ENCODE measurements at regions of chr7 and their contacts with region 1.

Region 1: GRCh38 chr7:45435846-45436245 is 138.3 kb upstream of the ADCY1 start:
- H3K4me3 Mint-ChIP-seq: no peak overlapping the region
- H3K27ac Mint-ChIP-seq: no peak overlapping the region
- H3K4me1 Mint-ChIP-seq: no peaks in the 10 kb centered on the region
- H3K27me3 Mint-ChIP-seq: peaks cover 2% of the 10 kb centered on the region

Region 2: GRCh38 chr7:44145969-44146911 is 1289.6 kb before region 1 on chr7:
- intact Hi-C with region 1: no loop called
- H3K4me3 Mint-ChIP-seq: peak overlapping the region; percentile 57
- H3K27ac Mint-ChIP-seq: no peak overlapping the region
- H3K4me1 Mint-ChIP-seq: peaks cover 17% of the 10 kb centered on the region
- H3K27me3 Mint-ChIP-seq: peaks cover 46% of the 10 kb centered on the region

Region 3: DNA sequence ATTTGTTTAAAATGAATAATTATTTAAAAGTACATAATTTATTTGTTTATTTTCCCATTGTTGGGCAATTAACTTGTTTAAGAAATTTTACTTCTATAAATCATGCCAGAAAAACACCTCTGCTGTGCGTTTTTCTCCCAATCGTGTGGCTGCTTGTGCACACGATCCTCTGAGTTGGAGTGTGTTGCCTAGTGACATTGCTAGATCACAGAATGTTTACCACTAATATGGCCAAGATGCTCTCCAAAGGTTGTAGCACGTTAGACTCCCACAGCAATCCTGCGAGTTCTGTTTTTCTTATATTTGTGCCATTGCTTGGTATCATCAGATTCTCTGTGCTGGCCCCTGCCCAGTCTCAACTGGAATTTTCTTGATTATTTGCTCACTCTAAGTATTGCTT is 68.8 kb before region 1 on chr7:
- intact Hi-C with region 1: no loop called
- H3K4me3 Mint-ChIP-seq: no peak overlapping the region
- H3K27ac Mint-ChIP-seq: no peak overlapping the region
- H3K4me1 Mint-ChIP-seq: no peaks in the 10 kb centered on the region
- H3K27me3 Mint-ChIP-seq: peaks cover 2% of the 10 kb centered on the region

Region 4: GRCh38 chr7:45450571-45451204 is 14.8 kb after region 1 on chr7:
- intact Hi-C with region 1: loop called (anchors 1 kb)
- H3K4me3 Mint-ChIP-seq: no peak overlapping the region
- H3K27ac Mint-ChIP-seq: no peak overlapping the region
- H3K4me1 Mint-ChIP-seq: no peaks in the 10 kb centered on the region
- H3K27me3 Mint-ChIP-seq: peaks cover 3% of the 10 kb centered on the region

Measured in dendritic cell treated with granulocyte-macrophage colony-stimulating factor and Interleukin-4, amounts not matched to agents 40 ng/mL and 50 ng/mL, for 4 days (primary cell).